ENCODE measurements at regions of chr3 and their contacts with region 1.

Region 1: GRCh38 chr3:194671900-194672808 is at the start of gene LSG1:
- DNase-seq: peak; percentile 80 to 96 (median 87)
- ATAC-seq: peak; percentile 97
- H3K4me3 ChIP-seq: peak within 1 kb of the TSS; percentile 83
- H3K4me3 Mint-ChIP-seq: peak within 1 kb of the TSS; percentile 99
- H3K27ac ChIP-seq: peak within 1 kb of the TSS; percentile 94 to 99
- H3K27ac Mint-ChIP-seq: peak within 1 kb of the TSS; percentile 99
- H3K4me1 ChIP-seq: peaks cover 18% of the 10 kb centered on the region
- H3K4me1 Mint-ChIP-seq: peaks cover 46% of the 10 kb centered on the region
- H3K27me3 ChIP-seq: no peaks in the 10 kb centered on the region
- H3K27me3 Mint-ChIP-seq: no peaks in the 10 kb centered on the region
- CTCF ChIP-seq: no peak
- total RNA-seq, gene LSG1: 37.9 to 44.6 TPM

Region 2: GRCh38 chr3:194296454-194297263 is 375.5 kb before region 1 on chr3:
- CTCF ChIA-PET with region 1: no interaction called
- POLR2A ChIA-PET with region 1: no interaction called
- intact Hi-C with region 1: no loop called
- DNase-seq: no peak
- ATAC-seq: no peak
- H3K4me3 ChIP-seq: no peak overlapping the region
- H3K4me3 Mint-ChIP-seq: no peak overlapping the region
- H3K27ac ChIP-seq: no peak overlapping the region
- H3K27ac Mint-ChIP-seq: no peak overlapping the region
- H3K4me1 ChIP-seq: peaks cover 8% of the 10 kb centered on the region
- H3K4me1 Mint-ChIP-seq: peaks cover 6% of the 10 kb centered on the region
- H3K27me3 ChIP-seq: peaks cover 0 to 4% of the 10 kb centered on the region in 2 experiments
- H3K27me3 Mint-ChIP-seq: peaks cover 7% of the 10 kb centered on the region
- CTCF ChIP-seq: no peak

Region 3: DNA sequence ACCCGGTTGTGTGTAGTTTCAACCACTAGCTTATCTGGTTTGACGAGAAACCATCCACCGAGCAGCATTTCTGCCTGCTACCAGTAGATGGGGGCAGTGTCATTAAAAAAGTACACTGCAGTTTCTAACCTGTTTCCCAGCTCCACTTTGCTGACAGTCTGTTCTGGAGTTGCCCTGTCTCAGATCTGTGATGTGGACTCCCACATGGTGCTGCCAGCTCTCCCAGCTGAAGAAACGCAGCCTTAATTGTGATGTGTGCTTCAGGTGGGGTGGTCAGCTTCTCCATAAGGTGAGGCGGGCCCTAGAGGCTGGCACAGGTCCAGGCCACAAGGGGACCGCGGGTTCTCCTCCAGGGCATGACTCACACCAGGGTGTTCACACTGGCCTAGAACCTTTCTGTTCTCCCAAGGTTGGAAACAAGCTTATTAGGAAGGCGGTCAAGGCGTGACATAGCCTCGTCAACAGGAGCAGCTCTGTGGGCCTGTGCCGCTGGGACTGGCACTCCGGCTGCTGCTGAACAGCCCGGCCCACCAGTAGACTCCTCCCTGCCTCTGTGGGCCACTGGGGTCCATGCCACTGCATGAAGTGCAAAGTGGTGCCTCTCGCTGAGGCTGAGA is 10.6 kb after region 1 on chr3:
- CTCF ChIA-PET with region 1: interaction called, 60 read pairs
- POLR2A ChIA-PET with region 1: interaction called, 71 read pairs
- intact Hi-C with region 1: no loop called
- DNase-seq: peak; percentile 43 to 86 (median 53)
- ATAC-seq: peak; percentile 81
- H3K4me3 ChIP-seq: no peak overlapping the region
- H3K4me3 Mint-ChIP-seq: peak overlapping the region; percentile 13
- H3K27ac ChIP-seq: no peak overlapping the region
- H3K27ac Mint-ChIP-seq: no peak overlapping the region
- H3K4me1 ChIP-seq: peaks cover 43% of the 10 kb centered on the region
- H3K4me1 Mint-ChIP-seq: peaks cover 34% of the 10 kb centered on the region
- H3K27me3 ChIP-seq: no peaks in the 10 kb centered on the region
- H3K27me3 Mint-ChIP-seq: peaks cover 14% of the 10 kb centered on the region
- CTCF ChIP-seq: peak; percentile 72

Region 4: GRCh38 chr3:195106418-195106906 is 434.3 kb after region 1 on chr3:
- CTCF ChIA-PET with region 1: interaction called, 7 read pairs
- POLR2A ChIA-PET with region 1: no interaction called
- intact Hi-C with region 1: loop called in 1 of 2 experiments (anchors 1 kb)
- DNase-seq: peak; percentile 36 to 84 (median 60)
- ATAC-seq: peak; percentile 92
- H3K4me3 ChIP-seq: peak overlapping the region; percentile 6
- H3K4me3 Mint-ChIP-seq: no peak overlapping the region
- H3K27ac ChIP-seq: no peak overlapping the region
- H3K27ac Mint-ChIP-seq: no peak overlapping the region
- H3K4me1 ChIP-seq: peaks cover 8% of the 10 kb centered on the region
- H3K4me1 Mint-ChIP-seq: peaks cover 7% of the 10 kb centered on the region
- H3K27me3 ChIP-seq: no peaks in the 10 kb centered on the region
- H3K27me3 Mint-ChIP-seq: no peaks in the 10 kb centered on the region
- CTCF ChIP-seq: peak; percentile 99

Region 5: GRCh38 chr3:195442573-195443390 is 770.6 kb after region 1 on chr3 and contains the start of gene ACAP2:
- CTCF ChIA-PET with region 1: no interaction called
- POLR2A ChIA-PET with region 1: interaction called, 6 read pairs
- intact Hi-C with region 1: loop called in 1 of 2 experiments (anchors 2 kb)
- DNase-seq: peak; percentile 95 to 100 (median 99)
- ATAC-seq: peak; percentile 91
- H3K4me3 ChIP-seq: peak within 1 kb of the TSS; percentile 89
- H3K4me3 Mint-ChIP-seq: peak within 1 kb of the TSS; percentile 98
- H3K27ac ChIP-seq: peak within 1 kb of the TSS; percentile 74 to 85
- H3K27ac Mint-ChIP-seq: peak within 1 kb of the TSS; percentile 93
- H3K4me1 ChIP-seq: peaks cover 32% of the 10 kb centered on the region
- H3K4me1 Mint-ChIP-seq: peaks cover 65% of the 10 kb centered on the region
- H3K27me3 ChIP-seq: no peaks in the 10 kb centered on the region
- H3K27me3 Mint-ChIP-seq: no peaks in the 10 kb centered on the region
- CTCF ChIP-seq: no peak
- total RNA-seq, gene ACAP2: 50.7 to 51.4 TPM